Activated naive CD8-positive, alpha-beta T cell treated with anti-CD3 and anti-CD28 coated beads, Interleukin-2, amount 10 ng/mL, durations not matched to agents 7 days and 5 days (primary cell): ENCODE measurements at regions of chr1 and their contacts with region 1.

Region 1: GRCh38 chr1:228457396-228458176 is 29.6 kb upstream of the RNF187 start:
- DNase-seq: peak; percentile 87
- ATAC-seq: peak; percentile 85
- H3K4me3 Mint-ChIP-seq: peak overlapping the region; percentile 98
- H3K27ac Mint-ChIP-seq: peak overlapping the region; percentile 98
- H3K4me1 Mint-ChIP-seq: peaks cover 43% of the 10 kb centered on the region
- H3K27me3 Mint-ChIP-seq: no peaks in the 10 kb centered on the region

Region 2: DNA sequence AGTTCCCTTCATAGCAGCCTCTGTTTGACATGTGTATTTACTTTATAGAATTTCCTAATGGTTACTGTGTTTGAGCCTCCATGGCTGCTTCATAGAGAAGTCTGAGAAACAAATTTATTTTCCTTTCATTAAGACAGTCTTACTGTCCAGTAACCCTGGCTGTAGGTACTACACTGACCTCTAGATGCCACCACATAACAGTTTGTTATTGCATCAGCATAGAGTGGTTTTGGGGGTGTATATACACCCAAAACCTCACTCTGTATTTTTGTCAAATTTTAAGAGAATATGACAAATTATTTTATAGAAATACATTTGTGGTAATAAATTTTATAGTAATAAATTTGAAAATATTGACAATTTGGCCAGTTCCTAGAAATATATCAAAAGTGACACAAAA is 192.4 kb before region 1 on chr1:
- POLR2A ChIA-PET with region 1: no interaction called
- DNase-seq: no peak
- ATAC-seq: no peak
- H3K4me3 Mint-ChIP-seq: no peak overlapping the region
- H3K27ac Mint-ChIP-seq: no peak overlapping the region
- H3K4me1 Mint-ChIP-seq: peaks cover 4% of the 10 kb centered on the region
- H3K27me3 Mint-ChIP-seq: no peaks in the 10 kb centered on the region

Region 3: GRCh38 chr1:228405987-228406265 is 51.7 kb before region 1 on chr1:
- POLR2A ChIA-PET with region 1: interaction called, 107 read pairs
- DNase-seq: no peak
- ATAC-seq: peak; percentile 5
- H3K4me3 Mint-ChIP-seq: peak overlapping the region; percentile 99
- H3K27ac Mint-ChIP-seq: peak overlapping the region; percentile 95
- H3K4me1 Mint-ChIP-seq: peaks cover 42% of the 10 kb centered on the region
- H3K27me3 Mint-ChIP-seq: no peaks in the 10 kb centered on the region

Region 4: GRCh38 chr1:228478912-228479711 is 21.5 kb after region 1 on chr1:
- POLR2A ChIA-PET with region 1: interaction called, 31 read pairs
- DNase-seq: peak; percentile 55
- ATAC-seq: peak; percentile 87
- H3K4me3 Mint-ChIP-seq: peak overlapping the region; percentile 73
- H3K27ac Mint-ChIP-seq: peak overlapping the region; percentile 92
- H3K4me1 Mint-ChIP-seq: peaks cover 45% of the 10 kb centered on the region
- H3K27me3 Mint-ChIP-seq: peaks cover 2% of the 10 kb centered on the region

Region 5: DNA sequence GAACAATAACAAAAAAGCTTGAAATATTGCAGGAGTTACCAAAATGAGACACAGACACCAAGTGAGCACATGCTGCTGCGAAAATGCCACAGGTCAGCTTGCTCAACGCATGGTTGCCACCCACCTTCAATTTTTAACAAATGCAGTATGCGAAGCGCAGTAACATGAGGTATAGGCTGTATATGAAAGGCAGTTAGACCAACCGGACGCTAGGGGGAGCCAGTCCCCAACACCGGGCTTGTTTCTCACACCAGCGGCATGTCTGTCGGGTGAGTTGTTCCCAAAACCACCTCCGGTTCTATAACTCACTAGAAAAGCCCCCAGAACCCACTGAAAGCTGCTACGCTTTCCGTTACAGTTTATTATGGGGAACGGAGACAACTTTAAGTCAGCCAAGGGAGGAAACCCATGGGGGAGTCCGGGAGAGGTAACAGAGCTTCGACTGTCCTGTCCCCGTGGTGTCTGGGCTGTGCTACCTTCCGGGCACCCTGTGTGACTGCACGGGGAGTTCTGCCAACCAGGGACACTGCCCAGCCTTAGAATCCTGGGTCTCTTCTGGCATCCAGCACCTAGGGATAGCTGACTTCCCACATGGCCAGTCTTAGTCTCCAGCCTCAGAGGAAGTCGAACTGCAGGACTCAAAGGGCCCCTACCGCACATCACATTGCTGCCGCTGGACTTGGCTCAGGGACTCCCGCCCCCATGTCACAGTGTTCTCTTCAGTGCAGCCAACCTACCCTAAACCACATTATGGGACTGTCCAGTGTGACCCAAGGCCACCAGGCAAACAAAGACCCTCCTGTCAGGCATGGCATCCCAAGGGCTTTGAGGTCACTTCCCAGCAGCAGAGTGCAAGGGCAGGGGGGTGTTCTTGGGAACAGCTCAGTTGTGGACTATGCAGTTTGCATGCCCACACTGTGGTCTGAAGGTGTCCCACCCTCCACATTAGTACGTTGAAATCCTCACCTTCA is 43.6 kb after region 1 on chr1:
- POLR2A ChIA-PET with region 1: interaction called, 31 read pairs
- DNase-seq: peak; percentile 86
- ATAC-seq: peak; percentile 96
- H3K4me3 Mint-ChIP-seq: peak overlapping the region; percentile 76
- H3K27ac Mint-ChIP-seq: peak overlapping the region; percentile 68
- H3K4me1 Mint-ChIP-seq: peaks cover 32% of the 10 kb centered on the region
- H3K27me3 Mint-ChIP-seq: peaks cover 2% of the 10 kb centered on the region